ENCODE measurements at regions of chr4 and their contacts with region 1.

Region 1: DNA sequence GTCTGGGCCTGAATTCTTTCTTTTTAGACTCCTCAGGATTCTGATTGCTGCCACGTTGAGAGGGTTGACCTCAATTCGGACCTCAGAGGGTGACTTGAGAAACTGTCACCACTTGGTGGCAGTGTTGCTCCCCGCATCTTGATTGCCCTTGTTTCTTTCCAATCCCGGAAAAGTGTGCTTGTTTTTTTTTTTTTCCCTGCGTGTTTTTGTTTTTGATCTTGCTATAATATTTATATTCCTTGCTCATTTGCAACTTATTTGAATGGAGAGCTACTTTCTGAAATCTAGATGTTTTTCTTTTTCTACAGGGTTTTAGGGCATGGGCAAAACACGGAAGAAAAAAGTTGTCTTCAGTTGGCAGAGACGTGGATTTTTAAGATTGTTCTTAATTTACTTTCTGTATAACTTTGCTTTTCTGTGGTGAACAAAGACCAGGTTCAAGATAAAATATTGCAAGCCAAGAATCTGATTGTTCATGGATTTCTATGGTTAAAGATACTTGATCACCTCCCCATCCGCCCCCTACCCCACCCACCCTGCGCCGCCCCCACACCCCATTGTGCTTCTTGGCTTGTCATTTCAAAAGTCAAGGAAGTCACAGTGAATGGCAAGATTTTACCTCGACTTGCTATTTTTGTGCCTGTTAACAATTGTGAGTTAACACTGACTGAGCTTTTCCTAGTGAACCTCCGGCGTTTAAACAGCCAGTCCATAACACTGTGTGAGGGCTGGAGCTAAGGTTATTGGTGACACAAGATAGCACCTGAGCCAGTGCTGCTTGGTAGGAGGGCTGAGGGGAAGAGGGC is 102.1 kb downstream of the PTTG2 start:
- DNase-seq: peak; percentile 90
- H3K4me3 ChIP-seq: no peak overlapping the region
- H3K27ac ChIP-seq: peak overlapping the region; percentile 38
- H3K4me1 ChIP-seq: no peaks in the 10 kb centered on the region
- H3K27me3 ChIP-seq: no peaks in the 10 kb centered on the region
- CTCF ChIP-seq: peak; percentile 83

Region 2: GRCh38 chr4:37994569-37994968 is 67.7 kb before region 1 on chr4:
- intact Hi-C with region 1: no loop called
- DNase-seq: no peak
- H3K4me3 ChIP-seq: no peak overlapping the region
- H3K27ac ChIP-seq: no peak overlapping the region
- H3K4me1 ChIP-seq: peaks cover 3% of the 10 kb centered on the region
- H3K27me3 ChIP-seq: no peaks in the 10 kb centered on the region
- CTCF ChIP-seq: no peak

Region 3: DNA sequence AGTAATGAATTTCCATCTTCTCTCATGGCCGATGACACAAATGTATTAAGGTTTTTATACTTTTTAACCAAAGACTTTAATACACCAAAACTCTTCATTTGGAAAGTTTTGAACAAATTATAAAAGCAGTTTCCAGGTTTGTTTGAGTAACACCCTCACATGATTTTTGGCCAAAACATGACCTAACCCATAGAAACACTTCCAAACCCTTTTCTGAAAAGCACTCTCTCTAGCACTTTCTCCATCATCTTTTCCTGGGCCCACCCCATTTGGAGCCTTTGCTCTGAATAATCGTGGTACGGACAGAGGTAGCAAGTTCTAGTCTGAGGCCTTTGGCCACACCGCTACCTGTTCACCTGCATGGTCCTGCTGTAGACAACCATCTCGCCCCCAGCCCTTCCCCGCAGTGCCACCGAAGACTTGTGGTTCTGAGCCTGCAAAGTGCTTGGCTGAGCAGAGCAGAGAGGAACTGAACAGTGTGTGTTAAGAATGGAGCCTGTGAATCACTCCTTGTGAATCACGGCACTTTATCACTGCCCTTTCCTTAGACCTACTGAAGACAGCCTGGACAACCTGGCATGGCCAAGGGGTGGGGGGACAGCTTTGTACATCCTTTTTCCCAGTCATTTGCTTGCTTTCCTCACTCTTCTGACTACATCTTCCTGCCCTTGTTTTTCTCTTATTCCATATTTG is 79.7 kb after region 1 on chr4:
- intact Hi-C with region 1: no loop called
- DNase-seq: no peak
- H3K4me3 ChIP-seq: no peak overlapping the region
- H3K27ac ChIP-seq: no peak overlapping the region
- H3K4me1 ChIP-seq: no peaks in the 10 kb centered on the region
- H3K27me3 ChIP-seq: no peaks in the 10 kb centered on the region
- CTCF ChIP-seq: no peak

Region 4: GRCh38 chr4:38179690-38180377 is 117.5 kb after region 1 on chr4:
- intact Hi-C with region 1: loop called (anchors 5 kb)
- DNase-seq: peak; percentile 88
- H3K4me3 ChIP-seq: no peak overlapping the region
- H3K27ac ChIP-seq: peak overlapping the region; percentile 38
- H3K4me1 ChIP-seq: no peaks in the 10 kb centered on the region
- H3K27me3 ChIP-seq: no peaks in the 10 kb centered on the region
- CTCF ChIP-seq: peak; percentile 99

Region 5: DNA sequence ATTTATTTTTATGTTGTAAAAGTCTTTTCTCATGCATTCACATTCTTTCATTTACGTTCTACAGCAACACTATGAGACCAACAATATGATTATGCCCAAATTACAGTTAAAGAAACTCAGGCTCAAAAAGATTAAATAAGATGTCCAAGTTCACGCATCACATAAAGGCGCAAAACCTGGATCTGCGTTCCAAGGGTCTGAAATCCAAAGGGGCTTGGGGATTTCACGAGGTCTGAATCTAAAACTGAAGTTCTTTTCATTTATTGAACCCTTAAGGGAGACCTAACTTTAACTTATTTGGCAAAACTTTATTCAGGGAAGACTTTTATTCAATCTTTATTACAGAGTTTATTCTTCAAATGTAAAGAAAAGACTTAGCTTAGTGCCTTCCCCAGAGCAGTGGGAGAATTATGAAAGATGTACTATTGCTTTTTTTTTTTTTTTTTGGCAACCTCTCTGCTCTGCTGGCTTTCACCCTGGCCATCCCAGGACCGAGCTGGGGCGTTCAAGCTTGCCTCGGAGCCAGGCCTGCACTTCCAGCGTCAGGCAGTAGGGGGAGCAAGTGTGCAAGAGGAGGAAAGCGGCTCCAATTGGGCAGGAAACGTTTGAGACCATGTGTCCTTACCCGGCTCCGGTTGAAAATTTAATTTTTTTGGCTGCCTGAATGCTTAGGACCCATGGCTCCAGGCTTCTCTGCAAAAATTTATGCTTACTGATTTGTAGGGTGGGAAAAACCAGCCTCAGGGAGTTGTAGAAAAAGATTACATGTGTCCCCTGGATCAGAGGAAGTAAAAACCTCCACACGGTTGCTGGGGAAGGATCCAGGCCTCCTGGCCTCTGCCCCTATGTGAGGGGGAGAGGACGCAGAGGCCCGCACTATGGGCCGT is 257.4 kb after region 1 on chr4:
- intact Hi-C with region 1: loop called (anchors 5 kb)
- DNase-seq: peak; percentile 99
- H3K4me3 ChIP-seq: peak overlapping the region; percentile 26
- H3K27ac ChIP-seq: peak overlapping the region; percentile 92
- H3K4me1 ChIP-seq: peaks cover 7% of the 10 kb centered on the region
- H3K27me3 ChIP-seq: no peaks in the 10 kb centered on the region
- CTCF ChIP-seq: peak; percentile 99